GM12878 (cell line): ENCODE measurements at regions of chr4 and their contacts with region 1.

Region 1: GRCh38 chr4:80989921-80990544 is 40.5 kb upstream of the BMP3 start:
- DNase-seq: peak; percentile 26
- ATAC-seq: peak; percentile 85
- H3K4me3 ChIP-seq: no peak overlapping the region
- H3K27ac ChIP-seq: no peak overlapping the region
- H3K4me1 ChIP-seq: no peaks in the 10 kb centered on the region
- H3K27me3 ChIP-seq: no peaks in the 10 kb centered on the region
- CTCF ChIP-seq: peak; percentile 58 to 68 (median 61)
- EP300 ChIP-seq: no peak
- POLR2A ChIP-seq: no peak
- RAD21 ChIP-seq: peak; percentile 80

Region 2: GRCh38 chr4:79638735-79639134 is 1351.3 kb before region 1 on chr4:
- CTCF ChIA-PET with region 1: no interaction called
- POLR2A ChIA-PET with region 1: no interaction called
- RAD21 ChIA-PET with region 1: no interaction called
- SMC1A ChIA-PET with region 1: no interaction called
- in situ Hi-C with region 1: no loop called
- intact Hi-C with region 1: no loop called
- DNase-seq: no peak
- ATAC-seq: no peak
- H3K4me3 ChIP-seq: no peak overlapping the region
- H3K27ac ChIP-seq: no peak overlapping the region
- H3K4me1 ChIP-seq: no peaks in the 10 kb centered on the region
- H3K27me3 ChIP-seq: no peaks in the 10 kb centered on the region
- CTCF ChIP-seq: no peak
- EP300 ChIP-seq: no peak
- POLR2A ChIP-seq: no peak
- RAD21 ChIP-seq: no peak

Region 3: GRCh38 chr4:80619070-80619674 is 370.9 kb before region 1 on chr4:
- CTCF ChIA-PET with region 1: interaction called, 9 read pairs
- POLR2A ChIA-PET with region 1: no interaction called
- RAD21 ChIA-PET with region 1: interaction called, 3 read pairs
- SMC1A ChIA-PET with region 1: interaction called, 6 read pairs
- in situ Hi-C with region 1: no loop called
- intact Hi-C with region 1: loop called (anchors 1 kb)
- DNase-seq: no peak
- ATAC-seq: peak; percentile 48; the same call in 2 of the 3 replicates
- H3K4me3 ChIP-seq: no peak overlapping the region
- H3K27ac ChIP-seq: no peak overlapping the region
- H3K4me1 ChIP-seq: no peaks in the 10 kb centered on the region
- H3K27me3 ChIP-seq: no peaks in the 10 kb centered on the region
- CTCF ChIP-seq: peak in 2 of 3 experiments; percentile 14 to 42; a peak in 3 of 6 replicates
- EP300 ChIP-seq: no peak
- POLR2A ChIP-seq: no peak
- RAD21 ChIP-seq: peak; percentile 52

Region 4: GRCh38 chr4:80897537-80898303 is 92.3 kb before region 1 on chr4:
- CTCF ChIA-PET with region 1: interaction called, 9 read pairs
- POLR2A ChIA-PET with region 1: no interaction called
- RAD21 ChIA-PET with region 1: interaction called, 17 read pairs
- SMC1A ChIA-PET with region 1: interaction called, 11 read pairs
- in situ Hi-C with region 1: no loop called
- intact Hi-C with region 1: no loop called
- DNase-seq: peak; percentile 60
- ATAC-seq: peak; percentile 83
- H3K4me3 ChIP-seq: no peak overlapping the region
- H3K27ac ChIP-seq: 0 out of 2 replicates have a peak overlapping the region, but pooled peaks have one; percentile 1
- H3K4me1 ChIP-seq: peaks cover 7% of the 10 kb centered on the region
- H3K27me3 ChIP-seq: no peaks in the 10 kb centered on the region
- CTCF ChIP-seq: no peak
- EP300 ChIP-seq: no peak
- POLR2A ChIP-seq: no peak
- RAD21 ChIP-seq: no peak

Region 5: GRCh38 chr4:81003597-81004111 is 13.6 kb after region 1 on chr4:
- CTCF ChIA-PET with region 1: interaction called, 15 read pairs
- POLR2A ChIA-PET with region 1: no interaction called
- RAD21 ChIA-PET with region 1: interaction called, 5 read pairs
- SMC1A ChIA-PET with region 1: interaction called, 4 read pairs
- in situ Hi-C with region 1: no loop called
- intact Hi-C with region 1: no loop called
- DNase-seq: peak; percentile 75
- ATAC-seq: peak; percentile 98
- H3K4me3 ChIP-seq: no peak overlapping the region
- H3K27ac ChIP-seq: no peak overlapping the region
- H3K4me1 ChIP-seq: peaks cover 6% of the 10 kb centered on the region; the same call in 1 of the 2 replicates
- H3K27me3 ChIP-seq: no peaks in the 10 kb centered on the region
- CTCF ChIP-seq: no peak
- EP300 ChIP-seq: peak; percentile 87 to 96
- POLR2A ChIP-seq: no peak
- RAD21 ChIP-seq: no peak

Region 6: DNA sequence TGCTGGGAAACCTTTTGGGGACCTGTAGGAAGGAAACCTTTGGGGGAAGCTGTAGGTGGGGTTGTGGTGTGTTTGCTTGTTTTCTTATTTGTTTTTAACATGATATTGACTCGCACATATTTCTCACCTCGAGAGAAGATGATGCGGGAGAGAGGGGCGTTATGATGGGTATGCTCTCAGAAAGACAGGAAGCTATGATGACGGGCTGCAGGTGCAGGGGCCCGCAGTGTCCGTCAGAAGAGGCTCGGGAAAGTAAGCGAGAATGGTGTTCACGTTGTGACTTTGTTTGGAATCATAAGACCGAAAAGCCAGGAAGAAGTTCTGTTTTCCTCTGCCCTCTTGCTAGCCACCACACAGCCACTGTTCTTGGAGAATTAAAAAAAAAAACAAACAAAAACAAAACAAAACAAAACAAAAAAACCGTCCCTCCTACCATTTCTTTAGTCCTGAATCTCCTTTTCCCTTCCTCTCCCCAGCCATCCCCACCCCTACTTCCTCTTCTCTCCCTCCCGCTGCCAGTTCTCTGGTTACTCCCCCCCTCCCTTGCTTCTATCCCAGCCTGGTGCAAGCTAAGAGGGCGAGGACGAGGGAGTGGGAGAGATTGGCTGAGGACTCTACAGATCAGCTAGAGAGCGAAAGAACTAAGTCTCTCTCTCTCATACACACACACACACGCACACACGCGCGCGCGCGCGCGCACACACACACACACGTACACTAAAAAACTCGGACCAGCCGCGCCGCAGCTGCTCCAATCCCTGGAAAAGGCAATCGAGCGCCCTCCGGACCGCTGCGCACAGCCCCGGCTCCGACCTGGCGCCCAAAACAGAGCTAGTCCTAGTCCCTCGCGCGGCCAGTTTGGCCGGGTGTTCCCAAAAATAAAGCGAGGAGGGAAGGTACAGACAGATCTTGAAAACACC is 40.3 kb after region 1 on chr4 and contains the start of gene BMP3:
- CTCF ChIA-PET with region 1: interaction called, 4 read pairs
- POLR2A ChIA-PET with region 1: no interaction called
- RAD21 ChIA-PET with region 1: interaction called, 8 read pairs
- SMC1A ChIA-PET with region 1: interaction called, 30 read pairs
- in situ Hi-C with region 1: no loop called
- intact Hi-C with region 1: no loop called
- DNase-seq: no peak
- ATAC-seq: peak; percentile 61
- H3K4me3 ChIP-seq: peak within 1 kb of the TSS; percentile 65
- H3K27ac ChIP-seq: no peak within 1 kb of the TSS
- H3K4me1 ChIP-seq: no peaks in the 10 kb centered on the region
- H3K27me3 ChIP-seq: peaks cover 6 to 7% of the 10 kb centered on the region in 2 experiments; a peak in 3 of 4 replicates
- CTCF ChIP-seq: no peak
- EP300 ChIP-seq: no peak
- POLR2A ChIP-seq: no peak
- RAD21 ChIP-seq: no peak
- polyA plus RNA-seq, gene BMP3: 0.37 to 1.3 TPM

Region 7: DNA sequence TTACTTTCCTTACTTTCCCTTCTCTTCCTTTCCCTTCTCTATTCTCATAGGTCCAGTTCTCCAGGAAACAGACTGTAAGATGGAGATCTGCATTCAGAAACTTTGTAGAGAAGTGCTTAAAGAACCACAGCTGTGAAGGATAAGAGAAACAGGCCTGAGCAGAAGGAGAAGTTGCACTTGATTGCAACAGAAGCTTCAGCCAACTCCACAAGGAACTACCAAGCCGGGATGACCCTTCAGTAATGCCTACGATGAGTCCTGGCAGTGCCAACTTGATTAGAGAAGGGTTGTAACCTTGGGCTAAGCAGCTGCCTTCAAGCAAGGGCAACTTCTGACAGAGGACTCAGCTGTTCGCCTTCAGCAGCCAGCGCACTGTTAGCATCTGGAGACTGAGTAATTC is 895.0 kb after region 1 on chr4:
- CTCF ChIA-PET with region 1: no interaction called
- POLR2A ChIA-PET with region 1: no interaction called
- RAD21 ChIA-PET with region 1: no interaction called
- SMC1A ChIA-PET with region 1: no interaction called
- in situ Hi-C with region 1: no loop called
- intact Hi-C with region 1: no loop called
- DNase-seq: no peak
- ATAC-seq: no peak
- H3K4me3 ChIP-seq: no peak overlapping the region
- H3K27ac ChIP-seq: no peak overlapping the region
- H3K4me1 ChIP-seq: no peaks in the 10 kb centered on the region
- H3K27me3 ChIP-seq: no peaks in the 10 kb centered on the region; a peak in 1 of 4 replicates
- CTCF ChIP-seq: no peak
- EP300 ChIP-seq: no peak
- POLR2A ChIP-seq: no peak
- RAD21 ChIP-seq: no peak